ENCODE measurements at regions of chr19 and their contacts with region 1.

Region 1: DNA sequence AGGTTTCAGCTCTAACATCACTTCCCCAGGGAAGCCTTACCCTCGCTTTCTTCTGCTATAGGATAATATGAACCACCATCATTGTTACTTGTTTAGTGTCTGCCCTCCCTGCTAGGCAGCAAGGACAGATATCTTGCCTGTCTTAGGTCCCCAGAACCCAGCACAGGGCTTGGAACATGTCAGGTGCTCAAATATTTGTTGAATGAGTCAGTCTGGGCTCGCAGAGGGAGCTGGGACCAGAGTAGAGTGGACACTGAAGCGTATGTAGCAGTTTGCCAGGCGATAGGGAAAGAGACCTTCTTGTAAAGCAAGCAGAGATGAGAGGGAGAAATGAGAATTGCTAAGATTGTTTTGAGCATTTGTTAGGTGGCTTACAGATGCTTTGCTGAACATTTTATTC is 11.7 kb downstream of the BCKDHA start:
- DNase-seq: peak in 2 of 4 experiments; percentile 22 to 49
- ATAC-seq: peak; percentile 53
- H3K4me3 ChIP-seq: no peak overlapping the region
- H3K27ac ChIP-seq: 0 out of 3 replicates have a peak overlapping the region, but pooled peaks have one; percentile 25
- H3K4me1 ChIP-seq: peaks cover 7 to 12% of the 10 kb centered on the region in 2 experiments; a peak in 4 of 5 replicates
- H3K27me3 ChIP-seq: no peaks in the 10 kb centered on the region
- CTCF ChIP-seq: no peak
- EP300 ChIP-seq: no peak
- POLR2A ChIP-seq: no peak
- RAD21 ChIP-seq: no peak

Region 2: GRCh38 chr19:40598121-40598917 is 811.0 kb before region 1 on chr19:
- CTCF ChIA-PET with region 1: no interaction called
- POLR2A ChIA-PET with region 1: no interaction called
- in situ Hi-C with region 1: no loop called
- intact Hi-C with region 1: no loop called
- DNase-seq: peak; percentile 68 to 96 (median 76)
- ATAC-seq: peak; percentile 70
- H3K4me3 ChIP-seq: peak overlapping the region; percentile 48
- H3K27ac ChIP-seq: peak overlapping the region; percentile 70; the same call in 2 of the 3 replicates
- H3K4me1 ChIP-seq: peaks cover 45 to 82% of the 10 kb centered on the region in 2 experiments
- H3K27me3 ChIP-seq: no peaks in the 10 kb centered on the region
- CTCF ChIP-seq: peak; percentile 97 to 99 (median 98)
- EP300 ChIP-seq: peak; percentile 28; the same call in 1 of the 2 replicates
- POLR2A ChIP-seq: no peak; the same call in 1 of the 2 replicates
- RAD21 ChIP-seq: peak; percentile 89 to 94

Region 3: GRCh38 chr19:41426952-41427646 is 17.8 kb after region 1 on chr19 and contains the start of gene B3GNT8:
- CTCF ChIA-PET with region 1: no interaction called
- POLR2A ChIA-PET with region 1: interaction called, 11 read pairs
- in situ Hi-C with region 1: no loop called
- intact Hi-C with region 1: no loop called
- DNase-seq: peak; percentile 92 to 94 (median 94)
- ATAC-seq: peak; percentile 96
- H3K4me3 ChIP-seq: peak within 1 kb of the TSS; percentile 35
- H3K27ac ChIP-seq: peak within 1 kb of the TSS; percentile 79
- H3K4me1 ChIP-seq: peaks cover 23 to 56% of the 10 kb centered on the region in 2 experiments
- H3K27me3 ChIP-seq: no peaks in the 10 kb centered on the region
- CTCF ChIP-seq: no peak
- EP300 ChIP-seq: no peak
- POLR2A ChIP-seq: peak; percentile 51
- RAD21 ChIP-seq: no peak
- polyA plus RNA-seq, gene B3GNT8: 0.11 TPM in 1 of 2 experiments, not detected in the other

Measured in K562 (cell line).